PC-9 (cell line): ENCODE measurements at regions of chr17 and their contacts with region 1.

Region 1: GRCh38 chr17:31581022-31581490 is 189.6 kb downstream of the RAB11FIP4 start:
- DNase-seq: peak; percentile 90 to 95
- H3K4me3 ChIP-seq: no peak overlapping the region
- H3K27ac ChIP-seq: peak overlapping the region; percentile 71
- H3K4me1 ChIP-seq: peaks cover 63% of the 10 kb centered on the region
- H3K27me3 ChIP-seq: no peaks in the 10 kb centered on the region
- CTCF ChIP-seq: no peak

Region 2: DNA sequence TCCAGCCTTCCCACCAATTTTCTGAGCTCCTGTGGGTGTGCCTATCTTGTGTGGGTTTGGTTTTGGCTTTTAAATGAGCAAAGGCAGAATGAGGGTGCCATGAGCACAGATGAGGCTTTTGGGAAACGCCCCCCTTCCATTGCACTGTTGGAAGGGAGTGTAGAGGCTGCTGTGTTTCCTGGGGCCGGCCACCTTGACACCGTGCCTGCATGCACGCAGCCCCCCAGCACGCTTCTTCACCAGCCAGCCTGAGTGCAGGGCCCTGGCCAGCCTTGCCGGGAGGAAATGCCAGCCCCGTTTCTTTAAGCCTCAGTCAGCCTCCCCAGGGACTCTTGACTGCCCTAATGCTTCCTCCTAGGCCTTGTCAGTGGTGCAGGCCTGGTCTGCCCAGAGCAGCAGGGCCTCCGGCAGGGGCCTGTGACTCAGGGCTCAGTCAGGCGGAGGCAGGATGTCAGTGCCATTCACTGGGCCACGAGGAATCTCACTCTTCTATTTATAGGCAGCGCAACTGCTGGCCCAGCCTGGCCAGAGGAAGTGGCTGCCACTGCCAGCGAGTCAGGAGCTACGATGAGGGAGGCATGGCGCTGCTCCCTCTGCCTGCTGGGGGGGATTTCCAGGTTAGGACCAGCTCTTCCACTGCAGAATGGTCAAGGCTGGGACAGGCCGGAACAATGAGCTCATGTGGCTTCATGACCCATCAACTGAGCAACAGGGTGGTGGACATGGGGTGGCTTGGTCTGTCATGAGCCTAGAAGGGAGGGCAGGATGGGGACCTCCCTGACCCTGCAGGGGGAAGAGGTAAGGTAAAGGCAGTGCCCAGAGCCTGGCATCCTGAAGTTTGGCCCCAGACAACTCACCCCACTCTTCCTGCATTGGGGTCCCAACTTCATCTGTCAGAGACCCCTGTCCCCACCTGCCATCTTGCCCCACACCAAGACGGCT is 15.6 kb after region 1 on chr17:
- CTCF ChIA-PET with region 1: interaction called, 5 read pairs
- POLR2A ChIA-PET with region 1: interaction called, 11 read pairs
- intact Hi-C with region 1: loop called (anchors 1 kb)
- DNase-seq: peak; percentile 88 to 94
- H3K4me3 ChIP-seq: no peak overlapping the region
- H3K27ac ChIP-seq: peak overlapping the region; percentile 71
- H3K4me1 ChIP-seq: peaks cover 47% of the 10 kb centered on the region
- H3K27me3 ChIP-seq: no peaks in the 10 kb centered on the region
- CTCF ChIP-seq: no peak